MCF 10A (cell line): ENCODE measurements at regions of chr3 and their contacts with region 1.

Region 1: DNA sequence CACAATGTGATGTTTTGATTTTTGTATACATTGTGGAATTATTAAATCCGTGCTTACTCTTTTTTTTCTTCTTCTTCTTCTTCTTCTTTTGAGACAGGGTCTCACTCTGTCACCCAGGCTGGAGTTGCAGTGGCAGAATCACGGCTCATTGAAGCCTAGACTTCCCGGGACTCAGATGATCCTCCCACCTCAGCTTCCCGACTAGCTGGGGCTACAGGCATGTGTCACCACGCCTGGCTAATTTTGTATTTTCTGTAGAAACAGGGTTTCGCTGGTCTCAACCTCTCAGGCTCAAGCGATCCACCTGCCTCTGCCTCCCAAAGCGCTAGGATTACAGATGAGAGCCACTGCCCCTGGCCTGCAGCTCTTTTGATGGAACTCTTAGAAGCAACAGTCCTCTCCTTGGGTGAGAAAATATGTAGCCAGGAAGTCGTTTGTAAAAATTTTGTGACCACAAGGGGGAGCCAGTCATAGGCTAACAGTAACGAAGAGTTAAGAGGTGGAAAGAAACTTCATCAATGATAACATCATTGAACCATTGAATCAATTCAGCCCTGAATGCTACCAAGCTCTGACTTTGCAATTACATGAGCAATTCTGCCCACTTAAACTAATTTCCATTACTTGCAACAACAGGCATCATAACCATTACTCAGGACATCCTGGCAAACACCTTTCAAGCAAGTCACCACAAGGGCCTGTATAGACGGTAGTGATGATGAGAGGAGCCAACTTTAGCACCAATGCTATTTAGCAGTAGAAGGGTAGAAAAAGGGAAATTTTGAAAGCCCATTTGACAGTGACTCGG is 16.7 kb upstream of the CMTM7 start:
- DNase-seq: peak; percentile 79
- H3K4me3 Mint-ChIP-seq: no peak overlapping the region
- H3K27ac Mint-ChIP-seq: no peak overlapping the region
- H3K4me1 Mint-ChIP-seq: no peaks in the 10 kb centered on the region
- H3K27me3 Mint-ChIP-seq: no peaks in the 10 kb centered on the region
- CTCF ChIP-seq: peak; percentile 71

Region 2: GRCh38 chr3:32307591-32307990 is 67.4 kb before region 1 on chr3:
- CTCF ChIA-PET with region 1: interaction called, 11 read pairs
- POLR2A ChIA-PET with region 1: no interaction called
- intact Hi-C with region 1: no loop called
- DNase-seq: peak; percentile 33
- H3K4me3 Mint-ChIP-seq: no peak overlapping the region
- H3K27ac Mint-ChIP-seq: no peak overlapping the region
- H3K4me1 Mint-ChIP-seq: peaks cover 7% of the 10 kb centered on the region
- H3K27me3 Mint-ChIP-seq: no peaks in the 10 kb centered on the region
- CTCF ChIP-seq: no peak

Region 3: GRCh38 chr3:32401556-32402081 is 26.6 kb after region 1 on chr3:
- CTCF ChIA-PET with region 1: interaction called, 12 read pairs
- POLR2A ChIA-PET with region 1: no interaction called
- intact Hi-C with region 1: loop called (anchors 1 kb)
- DNase-seq: peak; percentile 55
- H3K4me3 Mint-ChIP-seq: peak overlapping the region; percentile 62
- H3K27ac Mint-ChIP-seq: peak overlapping the region; percentile 73
- H3K4me1 Mint-ChIP-seq: peaks cover 13% of the 10 kb centered on the region
- H3K27me3 Mint-ChIP-seq: no peaks in the 10 kb centered on the region
- CTCF ChIP-seq: no peak

Region 4: DNA sequence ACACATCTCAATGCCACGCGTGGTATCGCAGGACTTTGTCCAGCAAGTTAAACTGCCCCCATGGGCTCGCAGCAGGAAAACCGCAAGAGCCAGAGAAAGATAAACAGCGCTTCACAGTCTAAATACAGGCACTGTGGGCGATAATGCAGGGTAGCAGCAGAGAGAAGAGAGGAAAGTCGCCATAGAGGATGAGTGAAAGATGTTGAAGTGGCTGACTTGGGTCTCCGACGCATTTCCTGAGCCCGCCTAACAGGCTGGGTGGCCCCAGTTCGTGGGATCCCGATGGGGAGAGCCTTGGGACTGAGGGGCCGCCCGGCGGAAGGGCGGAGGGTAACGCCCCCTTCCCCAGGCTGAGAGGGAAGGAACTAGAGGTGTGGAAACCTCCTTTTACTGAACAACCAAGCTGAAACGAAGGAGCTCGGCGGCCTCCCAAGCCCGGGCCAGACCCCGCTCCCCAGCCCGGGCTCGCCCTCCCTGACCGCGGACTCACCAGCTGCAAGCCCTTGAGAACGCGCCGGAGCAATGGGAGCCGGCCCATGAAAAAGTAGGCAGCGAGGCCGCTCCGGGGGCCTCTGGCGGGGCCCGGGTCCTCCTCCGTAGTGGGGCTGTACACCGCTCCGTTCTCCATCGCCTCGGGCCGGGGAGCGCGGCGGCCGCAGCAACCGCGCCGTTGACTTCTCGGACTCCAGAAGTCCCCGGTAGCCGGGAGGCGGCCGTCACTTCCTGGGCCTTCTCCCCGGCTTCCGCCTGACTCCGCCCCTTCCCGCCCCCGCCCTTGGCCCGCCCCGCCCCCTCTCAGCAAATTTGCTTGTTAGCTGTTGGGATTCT is 127.3 kb after region 1 on chr3 and contains the start of gene CMTM6:
- CTCF ChIA-PET with region 1: interaction called, 4 read pairs
- POLR2A ChIA-PET with region 1: no interaction called
- intact Hi-C with region 1: loop called (anchors 2 kb)
- DNase-seq: peak; percentile 82
- H3K4me3 Mint-ChIP-seq: peak within 1 kb of the TSS; percentile 95
- H3K27ac Mint-ChIP-seq: peak within 1 kb of the TSS; percentile 67
- H3K4me1 Mint-ChIP-seq: peaks cover 14% of the 10 kb centered on the region
- H3K27me3 Mint-ChIP-seq: no peaks in the 10 kb centered on the region
- CTCF ChIP-seq: no peak
- total RNA-seq, gene CMTM6: 27.2 and 32.2 TPM in 2 replicates